ENCODE measurements at regions of chr10 and their contacts with region 1.

Region 1: GRCh38 chr10:96089670-96090462 is 40.2 kb upstream of the ZNF518A start:
- DNase-seq: peak; percentile 98
- H3K4me3 ChIP-seq: peak overlapping the region; percentile 76
- H3K27ac ChIP-seq: peak overlapping the region; percentile 86
- H3K4me1 ChIP-seq: peaks cover 11% of the 10 kb centered on the region
- CTCF ChIP-seq: 0 out of 2 replicates have a peak, but pooled peaks have one; percentile 3

Region 2: GRCh38 chr10:95674643-95675042 is 415.2 kb before region 1 on chr10:
- CTCF ChIA-PET with region 1: no interaction called
- POLR2A ChIA-PET with region 1: no interaction called
- intact Hi-C with region 1: no loop called
- DNase-seq: no peak
- H3K4me3 ChIP-seq: no peak overlapping the region
- H3K27ac ChIP-seq: no peak overlapping the region
- H3K4me1 ChIP-seq: no peaks in the 10 kb centered on the region
- CTCF ChIP-seq: no peak

Region 3: DNA sequence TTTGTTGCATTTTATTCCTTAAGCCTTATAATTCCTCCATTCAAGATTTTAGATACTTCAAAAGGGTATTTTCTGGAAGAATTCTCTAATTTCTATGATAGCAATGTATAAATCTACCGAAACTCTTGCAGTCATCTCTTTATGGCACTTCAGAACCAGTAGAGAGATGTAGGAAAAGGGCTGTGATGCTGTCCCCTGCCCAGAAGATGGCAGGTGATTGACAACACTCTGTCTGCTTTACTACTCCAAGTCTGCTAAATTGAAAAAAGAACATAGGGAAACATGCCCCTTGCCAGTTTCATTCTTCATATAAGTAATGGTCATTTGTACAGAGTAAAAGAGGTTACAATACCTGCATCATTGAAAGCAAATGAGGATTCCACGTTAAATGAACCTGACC is 401.2 kb before region 1 on chr10:
- CTCF ChIA-PET with region 1: no interaction called
- POLR2A ChIA-PET with region 1: no interaction called
- intact Hi-C with region 1: no loop called
- DNase-seq: peak; percentile 11
- H3K4me3 ChIP-seq: no peak overlapping the region
- H3K27ac ChIP-seq: no peak overlapping the region
- H3K4me1 ChIP-seq: peaks cover 16% of the 10 kb centered on the region
- CTCF ChIP-seq: peak; percentile 64

Region 4: GRCh38 chr10:96043033-96043932 is 46.6 kb before region 1 on chr10 and contains the start of gene CCNJ:
- CTCF ChIA-PET with region 1: no interaction called
- POLR2A ChIA-PET with region 1: no interaction called
- intact Hi-C with region 1: loop called (anchors 1 kb)
- DNase-seq: peak; percentile 91
- H3K4me3 ChIP-seq: peak within 1 kb of the TSS; percentile 89
- H3K27ac ChIP-seq: peak within 1 kb of the TSS; percentile 50
- H3K4me1 ChIP-seq: peaks cover 23% of the 10 kb centered on the region
- CTCF ChIP-seq: 0 out of 2 replicates have a peak, but pooled peaks have one; percentile 17
- total RNA-seq, gene CCNJ: 5.6 and 8.2 TPM in 2 replicates

Region 5: GRCh38 chr10:96129387-96130325 is 39.8 kb after region 1 on chr10 and contains the start of gene ZNF518A:
- CTCF ChIA-PET with region 1: no interaction called
- POLR2A ChIA-PET with region 1: interaction called, 32 read pairs
- intact Hi-C with region 1: loop called (anchors 1 kb)
- DNase-seq: peak; percentile 99
- H3K4me3 ChIP-seq: peak within 1 kb of the TSS; percentile 73
- H3K27ac ChIP-seq: peak within 1 kb of the TSS; percentile 92
- H3K4me1 ChIP-seq: peaks cover 34% of the 10 kb centered on the region
- CTCF ChIP-seq: no peak
- total RNA-seq, gene ZNF518A: 19.0 and 19.4 TPM in 2 replicates

Region 6: DNA sequence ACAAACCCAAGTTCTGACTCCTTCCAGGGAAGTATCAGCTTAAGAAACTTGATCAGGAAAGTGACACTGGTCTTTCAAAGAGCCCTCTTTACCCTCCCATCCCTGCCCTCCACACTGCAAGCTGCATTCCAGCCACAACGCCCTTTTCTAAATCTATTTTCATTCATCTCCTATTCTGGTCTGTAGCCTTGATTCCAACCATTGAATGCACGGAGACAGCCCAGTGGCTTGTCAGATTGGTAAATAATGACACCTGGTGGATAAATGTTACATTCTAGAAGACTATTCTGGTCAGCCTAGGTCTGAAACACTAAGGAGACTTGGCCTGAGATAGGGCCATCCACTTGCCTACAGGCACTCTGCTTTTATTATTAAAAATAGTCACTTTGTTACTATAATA is 1522.5 kb after region 1 on chr10:
- CTCF ChIA-PET with region 1: no interaction called
- POLR2A ChIA-PET with region 1: no interaction called
- intact Hi-C with region 1: no loop called
- DNase-seq: peak; percentile 57
- H3K4me3 ChIP-seq: no peak overlapping the region
- H3K27ac ChIP-seq: no peak overlapping the region
- H3K4me1 ChIP-seq: no peaks in the 10 kb centered on the region
- CTCF ChIP-seq: peak; percentile 74

Measured in OCI-LY7 (cell line).